Esophagus squamous epithelium (tissue), 5 donors: ENCODE measurements at regions of chr15 and their contacts with region 1.

Region 1: GRCh38 chr15:74768771-74769342 is 13.0 kb upstream of the CSK start:
- DNase-seq: no peak
- H3K4me3 ChIP-seq: no peak overlapping the region
- H3K27ac ChIP-seq: no peak overlapping the region
- H3K4me1 ChIP-seq: peaks cover 3 to 40% (median 18%) of the 10 kb centered on the region in 3 donors
- H3K27me3 ChIP-seq: peaks cover 0 to 24% (median 0%) of the 10 kb centered on the region in 4 donors
- CTCF ChIP-seq: peak; percentile 78 to 90 (median 88)
- POLR2A ChIP-seq: no peak

Region 2: DNA sequence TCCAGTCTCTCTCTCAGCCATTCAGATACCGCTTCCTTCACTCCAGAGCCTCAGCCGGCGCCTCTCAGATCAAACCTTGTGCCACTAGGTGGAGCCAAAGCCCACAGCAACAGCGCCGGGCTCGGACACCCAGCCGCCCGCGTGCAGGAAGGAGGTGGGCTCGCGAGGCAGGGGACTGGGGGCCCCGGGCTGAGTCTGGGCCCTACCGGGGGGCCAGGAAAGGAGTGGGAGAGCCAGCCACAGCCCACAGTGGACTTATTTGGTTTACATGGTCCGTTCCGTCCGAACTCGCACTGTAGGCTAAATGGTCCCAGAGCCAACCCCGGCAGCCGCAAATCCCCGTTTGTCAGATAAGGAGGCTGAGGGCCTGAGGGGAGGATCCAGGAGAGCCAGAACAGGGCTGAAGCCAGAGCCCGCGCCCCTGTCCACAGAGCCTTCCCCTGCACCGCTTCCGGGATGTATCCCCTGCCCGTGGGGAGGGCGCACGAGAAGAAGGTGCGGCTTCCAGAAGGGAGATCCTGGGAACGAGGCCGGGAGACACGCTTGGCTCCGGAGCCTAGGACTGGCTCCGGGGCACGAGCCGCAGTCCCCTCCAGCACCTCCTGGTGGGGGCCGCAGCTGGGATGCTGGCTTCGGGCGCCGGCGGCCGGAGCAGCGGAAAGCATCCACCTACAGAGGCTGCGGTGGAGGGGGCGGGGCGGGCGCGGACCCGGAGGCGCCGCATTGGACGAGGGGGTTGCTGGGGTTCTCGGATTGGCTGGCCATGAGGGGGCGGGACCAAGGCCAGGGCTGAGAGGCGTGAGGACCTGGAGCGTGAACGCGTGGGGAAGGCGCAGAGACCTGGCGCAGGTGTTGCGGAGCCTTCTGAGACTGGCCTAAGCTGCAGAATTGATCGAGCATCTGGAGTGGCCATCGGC is 394.9 kb before region 1 on chr15:
- intact Hi-C with region 1: loop called (anchors 10 kb)
- DNase-seq: peak; percentile 56
- H3K4me3 ChIP-seq: peak overlapping the region; percentile 36 to 77 (median 64)
- H3K27ac ChIP-seq: peak overlapping the region; percentile 29 to 79 (median 70)
- H3K4me1 ChIP-seq: peaks cover 8 to 29% (median 12%) of the 10 kb centered on the region in 3 donors
- H3K27me3 ChIP-seq: no peaks in the 10 kb centered on the region
- CTCF ChIP-seq: peak; percentile 83 to 94 (median 87)
- POLR2A ChIP-seq: no peak

Region 3: GRCh38 chr15:74635228-74635627 is 133.6 kb before region 1 on chr15:
- intact Hi-C with region 1: loop called (anchors 5 kb)
- DNase-seq: no peak
- H3K4me3 ChIP-seq: no peak overlapping the region
- H3K27ac ChIP-seq: no peak overlapping the region
- H3K4me1 ChIP-seq: peaks cover 0 to 7% (median 0%) of the 10 kb centered on the region in 3 donors
- H3K27me3 ChIP-seq: no peaks in the 10 kb centered on the region
- CTCF ChIP-seq: peak; percentile 64 to 95 (median 88)
- POLR2A ChIP-seq: no peak

Region 4: DNA sequence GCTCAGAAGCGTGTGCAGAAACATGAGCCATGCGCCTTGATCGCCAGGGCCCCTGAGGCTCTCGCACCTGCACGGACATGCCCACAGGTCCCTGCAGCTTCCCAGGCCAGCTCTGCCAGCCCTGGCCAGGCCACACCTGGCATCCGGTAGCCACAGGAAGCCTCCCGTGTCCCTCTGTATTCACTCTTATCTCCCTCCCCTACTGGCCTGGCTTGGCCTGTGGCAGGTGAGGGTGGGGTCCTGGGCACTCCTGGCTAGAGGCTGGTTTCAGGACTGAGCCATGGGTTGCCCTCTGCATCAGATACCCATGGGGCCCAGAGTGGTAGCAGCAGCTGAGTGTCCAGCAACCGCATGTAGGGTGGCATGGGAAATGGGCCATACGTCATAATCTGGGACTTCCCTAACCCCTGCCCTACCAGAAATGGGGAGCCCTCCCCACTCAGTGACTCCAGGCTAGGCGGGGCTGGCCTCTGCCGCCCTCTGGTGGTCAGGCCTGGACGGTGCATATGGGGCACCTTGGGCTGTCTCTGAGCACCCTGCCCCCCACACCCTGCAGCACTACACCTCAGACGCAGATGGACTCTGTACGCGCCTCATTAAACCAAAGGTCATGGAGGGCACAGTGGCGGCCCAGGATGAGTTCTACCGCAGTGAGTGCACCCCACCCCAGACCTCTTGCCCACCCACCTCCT is 31.1 kb after region 1 on chr15:
- intact Hi-C with region 1: loop called (anchors 2 kb)
- DNase-seq: no peak
- H3K4me3 ChIP-seq: no peak overlapping the region
- H3K27ac ChIP-seq: peak overlapping the region; percentile 83 to 92 (median 84)
- H3K4me1 ChIP-seq: peaks cover 24 to 58% (median 29%) of the 10 kb centered on the region in 3 donors
- H3K27me3 ChIP-seq: no peaks in the 10 kb centered on the region
- CTCF ChIP-seq: peak; percentile 98 to 99 (median 99)
- POLR2A ChIP-seq: no peak

Region 5: DNA sequence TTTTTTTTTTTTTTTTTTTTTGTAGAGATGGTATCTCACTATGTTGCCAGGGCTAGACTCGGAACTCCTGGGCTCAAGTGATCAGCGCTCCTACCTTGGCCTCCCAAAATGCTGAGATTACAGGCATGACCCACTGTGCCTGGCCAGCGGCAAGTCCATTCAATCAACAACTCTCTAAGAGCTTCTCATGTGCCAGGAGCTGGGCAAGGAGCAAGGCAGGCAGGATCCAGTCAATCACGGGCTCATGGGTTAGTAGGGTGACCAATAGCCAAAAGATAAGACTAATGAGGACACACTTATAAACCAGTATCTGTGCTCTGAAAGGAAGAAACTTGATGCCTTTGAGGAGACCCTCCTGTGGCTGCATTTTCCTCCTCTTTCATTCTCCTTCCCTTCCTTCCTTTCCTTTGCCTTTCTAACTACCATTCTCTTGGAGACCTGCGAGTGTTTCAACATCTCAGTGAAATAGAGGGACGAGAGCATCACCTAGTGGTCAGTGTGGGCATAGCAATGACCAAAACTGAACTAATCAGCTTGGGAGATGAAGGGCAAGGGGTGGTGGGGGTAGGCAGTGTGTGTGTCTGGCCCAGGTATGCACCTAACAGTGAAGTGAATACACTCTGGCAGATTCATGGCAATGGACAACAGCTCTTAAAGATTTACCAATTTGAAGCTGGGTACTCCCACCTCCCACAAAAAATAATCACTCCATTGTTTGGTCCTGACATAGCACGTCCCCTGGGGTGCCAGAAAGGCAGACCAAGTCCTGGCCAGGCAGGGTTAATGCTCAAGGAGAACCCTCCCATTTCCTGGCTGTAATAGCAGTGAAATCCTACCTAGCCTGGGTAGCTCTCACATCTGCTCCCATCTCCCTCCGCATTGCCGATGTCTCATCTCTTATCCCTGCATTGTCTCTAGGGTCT is 181.5 kb after region 1 on chr15:
- intact Hi-C with region 1: loop called (anchors 5 kb)
- DNase-seq: no peak
- H3K4me3 ChIP-seq: no peak overlapping the region
- H3K27ac ChIP-seq: no peak overlapping the region
- H3K4me1 ChIP-seq: peaks cover 13 to 46% (median 22%) of the 10 kb centered on the region in 3 donors
- H3K27me3 ChIP-seq: no peaks in the 10 kb centered on the region
- CTCF ChIP-seq: peak; percentile 76 to 98 (median 98)
- POLR2A ChIP-seq: no peak